ENCODE measurements at regions of chr12 and their contacts with region 1.

Region 1: GRCh38 chr12:54214553-54215406 is 26.0 kb upstream of the SMUG1 start:
- ATAC-seq: peak; percentile 65 to 90 (median 77)
- H3K4me3 ChIP-seq: no peak overlapping the region
- H3K27ac ChIP-seq: no peak overlapping the region
- H3K4me1 ChIP-seq: peaks cover 15 to 18% of the 10 kb centered on the region in 2 donors

Region 2: GRCh38 chr12:53757095-53757770 is 457.5 kb before region 1 on chr12:
- in situ Hi-C with region 1: loop called in 3 of 9 experiments (anchors 25 kb)
- ATAC-seq: peak; percentile 70 to 89 (median 80)
- H3K4me3 ChIP-seq: peak overlapping the region in 2 of 5 donors; percentile 7 to 12
- H3K27ac ChIP-seq: peak overlapping the region in 1 of 2 donors; percentile 31
- H3K4me1 ChIP-seq: peaks cover 40 to 41% of the 10 kb centered on the region in 2 donors

Region 3: GRCh38 chr12:54126696-54127537 is 87.9 kb before region 1 on chr12:
- in situ Hi-C with region 1: no loop called
- ATAC-seq: peak; percentile 38 to 75 (median 54)
- H3K4me3 ChIP-seq: peak overlapping the region; percentile 69 to 93 (median 87)
- H3K27ac ChIP-seq: peak overlapping the region; percentile 69 to 84
- H3K4me1 ChIP-seq: peaks cover 29 to 40% of the 10 kb centered on the region in 2 donors

Region 4: DNA sequence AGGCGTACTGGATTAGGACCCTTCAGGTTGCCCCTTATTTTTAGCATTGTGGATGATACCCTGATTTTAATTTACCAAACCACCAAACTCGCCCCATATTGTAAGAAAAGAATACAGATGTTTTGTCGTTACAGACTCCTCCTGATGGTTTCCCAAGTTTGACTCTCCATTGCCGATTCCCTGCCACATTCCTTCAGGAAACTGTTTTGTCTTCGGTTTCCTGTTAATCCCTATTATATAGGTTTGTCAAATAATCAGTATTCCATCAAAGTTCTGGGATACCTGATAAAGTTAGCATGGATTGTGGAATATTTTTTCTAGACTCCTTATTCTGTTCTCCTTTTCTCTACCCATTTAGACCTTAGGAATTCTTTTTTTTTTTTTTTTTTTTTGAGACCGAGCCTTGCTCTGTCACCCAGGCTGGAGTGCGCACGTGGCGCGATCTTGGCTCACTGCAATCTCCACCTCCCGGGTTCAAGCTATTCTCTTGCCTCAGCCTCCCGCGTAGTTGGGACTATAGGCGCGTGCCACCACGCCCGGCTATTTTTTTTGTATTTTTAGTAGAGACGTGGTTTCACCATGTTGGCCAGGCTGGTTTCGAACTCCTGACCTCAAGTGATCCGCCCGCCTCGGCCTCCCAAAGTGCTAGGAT is 110.8 kb after region 1 on chr12:
- in situ Hi-C with region 1: no loop called
- ATAC-seq: no peak
- H3K4me3 ChIP-seq: peak overlapping the region; percentile 64 to 92 (median 68)
- H3K27ac ChIP-seq: peak overlapping the region; percentile 94 to 98
- H3K4me1 ChIP-seq: peaks cover 21 to 30% of the 10 kb centered on the region in 2 donors